Activated naive CD4-positive, alpha-beta T cell treated with anti-CD3 and anti-CD28 coated beads for 36 hours (primary cell): ENCODE measurements at regions of chr16 and their contacts with region 1.

Region 1: GRCh38 chr16:21300309-21301167 is 22.4 kb upstream of the CRYM start:
- DNase-seq: peak; percentile 86
- H3K4me3 Mint-ChIP-seq: peak overlapping the region; percentile 90
- H3K27ac Mint-ChIP-seq: no peak overlapping the region
- H3K4me1 Mint-ChIP-seq: peaks cover 20% of the 10 kb centered on the region
- H3K27me3 Mint-ChIP-seq: peaks cover 17% of the 10 kb centered on the region

Region 2: DNA sequence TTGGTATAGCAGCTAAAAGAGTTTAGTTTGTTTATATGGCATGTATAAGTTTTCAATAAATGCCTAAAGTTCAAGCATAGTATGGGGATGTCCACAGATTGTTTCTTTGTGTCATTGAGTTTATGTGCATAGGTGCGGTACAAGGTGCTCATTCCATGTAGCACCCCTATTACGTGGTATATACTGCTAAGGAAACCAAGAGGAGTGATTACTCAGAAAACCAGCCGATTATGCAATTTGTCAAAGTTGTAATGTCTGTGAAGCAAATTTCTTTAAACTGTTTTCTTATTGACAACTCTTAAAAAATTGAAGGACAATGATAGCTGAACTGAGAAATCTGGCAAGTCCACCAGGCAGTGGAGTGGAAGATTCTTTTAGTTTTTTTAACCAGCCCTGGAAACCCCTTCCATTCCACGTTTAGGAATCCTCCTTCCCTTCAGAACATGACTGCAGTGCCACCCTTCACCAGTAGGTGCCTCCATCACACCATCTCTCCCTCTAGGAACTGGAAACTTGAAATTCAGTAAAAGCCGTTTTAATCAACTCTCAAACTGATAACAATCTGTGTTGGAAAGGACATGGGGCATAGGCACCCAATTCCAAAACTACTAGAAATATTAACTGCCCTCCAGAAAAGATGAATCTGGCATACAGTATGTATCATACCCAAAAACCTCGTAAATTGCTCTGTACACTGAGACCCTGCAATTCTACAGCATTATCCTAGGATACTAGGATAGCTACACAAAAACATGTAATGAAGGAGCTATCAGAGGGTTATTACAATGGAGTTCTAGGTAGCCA is 450.7 kb before region 1 on chr16:
- CTCF ChIA-PET with region 1: no interaction called
- intact Hi-C with region 1: loop called (anchors 1 kb)
- DNase-seq: peak; percentile 78
- H3K4me3 Mint-ChIP-seq: no peak overlapping the region
- H3K27ac Mint-ChIP-seq: no peak overlapping the region
- H3K4me1 Mint-ChIP-seq: peaks cover 8% of the 10 kb centered on the region
- H3K27me3 Mint-ChIP-seq: no peaks in the 10 kb centered on the region

Region 3: DNA sequence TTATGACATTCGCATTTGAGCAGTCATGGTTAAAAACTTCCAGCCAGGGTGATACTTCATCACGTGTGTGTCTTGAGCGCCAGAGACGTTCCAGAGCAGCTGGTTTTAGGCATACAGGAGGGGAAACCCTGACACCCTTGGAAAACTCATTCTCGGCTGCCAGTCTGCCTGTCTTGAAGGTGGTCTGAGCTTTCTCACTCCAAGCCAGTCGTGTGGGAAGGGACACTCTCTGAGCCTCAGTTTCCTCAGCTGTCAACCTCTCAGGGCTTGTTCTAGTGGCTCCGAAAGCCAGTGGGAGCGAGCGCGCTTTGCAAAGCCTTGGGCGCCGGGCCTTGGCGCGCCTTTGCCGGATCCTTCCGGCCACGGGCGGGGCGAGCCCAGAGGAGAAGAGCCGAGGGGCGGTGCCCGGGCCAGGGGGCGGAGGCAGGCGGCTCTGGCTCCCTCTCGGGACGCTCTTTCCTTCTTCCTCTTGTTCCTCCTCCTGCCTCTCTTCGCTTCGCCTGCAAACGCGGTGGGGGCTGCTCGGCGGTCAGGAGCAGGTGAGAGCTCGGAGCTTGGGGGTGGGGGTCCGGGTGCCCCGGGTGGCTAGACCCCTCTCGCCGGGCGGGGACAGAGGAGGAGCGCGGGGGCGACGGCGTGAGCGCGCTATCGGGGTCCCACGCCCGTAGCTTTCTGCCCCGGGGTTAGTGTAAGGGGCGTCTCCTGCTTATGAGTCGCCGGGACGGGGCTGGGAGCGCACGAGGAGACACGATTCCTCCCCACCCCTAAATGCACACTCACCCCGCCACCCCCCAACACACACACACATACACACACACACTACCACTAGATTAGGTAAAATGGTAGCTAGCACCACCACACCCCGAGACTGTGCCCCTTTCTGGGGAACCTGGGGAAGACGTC is 142.1 kb before region 1 on chr16 and contains the start of gene LDAF1:
- CTCF ChIA-PET with region 1: interaction called, 42 read pairs
- intact Hi-C with region 1: loop called (anchors 1 kb)
- DNase-seq: peak; percentile 86
- H3K4me3 Mint-ChIP-seq: peak within 1 kb of the TSS; percentile 88
- H3K27ac Mint-ChIP-seq: no peak within 1 kb of the TSS
- H3K4me1 Mint-ChIP-seq: peaks cover 26% of the 10 kb centered on the region
- H3K27me3 Mint-ChIP-seq: no peaks in the 10 kb centered on the region
- total RNA-seq, gene LDAF1: 13.3 to 14.5 TPM

Region 4: GRCh38 chr16:21277927-21278706 is 22.4 kb before region 1 on chr16 and contains the start of gene CRYM:
- CTCF ChIA-PET with region 1: interaction called, 9 read pairs
- intact Hi-C with region 1: loop called (anchors 1 kb)
- DNase-seq: peak; percentile 69
- H3K4me3 Mint-ChIP-seq: peak within 1 kb of the TSS; percentile 38
- H3K27ac Mint-ChIP-seq: no peak within 1 kb of the TSS
- H3K4me1 Mint-ChIP-seq: peaks cover 3% of the 10 kb centered on the region
- H3K27me3 Mint-ChIP-seq: peaks cover 62% of the 10 kb centered on the region
- total RNA-seq, gene CRYM: not detected

Region 5: DNA sequence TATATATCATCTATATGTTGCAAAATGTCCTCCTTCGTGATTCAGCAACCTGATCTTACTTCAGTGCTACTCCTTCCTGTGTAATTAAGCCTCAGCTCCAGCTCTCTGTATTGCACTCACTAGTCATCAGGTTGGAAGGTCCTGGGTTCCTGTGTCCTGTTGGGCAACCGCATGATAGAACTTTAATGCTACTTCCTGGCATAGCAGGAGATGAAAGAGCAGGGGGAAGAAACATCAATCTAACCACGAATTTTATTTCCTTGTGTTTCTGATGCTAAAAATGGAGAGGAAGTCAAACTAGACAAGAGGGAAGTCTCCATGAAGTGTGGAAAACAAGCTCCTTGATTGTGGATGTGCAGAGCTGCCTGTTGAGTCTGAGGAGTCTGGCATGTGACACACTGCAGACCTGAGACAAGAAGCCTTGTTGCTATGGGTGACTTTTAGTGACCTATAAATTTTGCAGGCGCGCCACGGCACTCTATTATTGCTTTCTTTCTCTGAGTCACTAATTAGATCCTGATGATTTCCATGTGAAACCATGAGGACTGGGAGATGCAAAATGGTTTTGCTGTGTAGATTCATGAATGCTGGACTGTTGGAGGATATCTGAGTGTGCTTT is 326.2 kb after region 1 on chr16:
- CTCF ChIA-PET with region 1: no interaction called
- intact Hi-C with region 1: no loop called
- DNase-seq: peak; percentile 52
- H3K4me3 Mint-ChIP-seq: no peak overlapping the region
- H3K27ac Mint-ChIP-seq: peak overlapping the region; percentile 6
- H3K4me1 Mint-ChIP-seq: peaks cover 45% of the 10 kb centered on the region
- H3K27me3 Mint-ChIP-seq: no peaks in the 10 kb centered on the region

Region 6: GRCh38 chr16:22321339-22322001 is 1020.9 kb after region 1 on chr16:
- CTCF ChIA-PET with region 1: no interaction called
- intact Hi-C with region 1: loop called (anchors 1 kb)
- DNase-seq: peak; percentile 83
- H3K4me3 Mint-ChIP-seq: no peak overlapping the region
- H3K27ac Mint-ChIP-seq: peak overlapping the region; percentile 75
- H3K4me1 Mint-ChIP-seq: no peaks in the 10 kb centered on the region
- H3K27me3 Mint-ChIP-seq: no peaks in the 10 kb centered on the region